Ascending aorta (tissue), 2 donors: ENCODE measurements at regions of chr5 and their contacts with region 1.

Region 1: DNA sequence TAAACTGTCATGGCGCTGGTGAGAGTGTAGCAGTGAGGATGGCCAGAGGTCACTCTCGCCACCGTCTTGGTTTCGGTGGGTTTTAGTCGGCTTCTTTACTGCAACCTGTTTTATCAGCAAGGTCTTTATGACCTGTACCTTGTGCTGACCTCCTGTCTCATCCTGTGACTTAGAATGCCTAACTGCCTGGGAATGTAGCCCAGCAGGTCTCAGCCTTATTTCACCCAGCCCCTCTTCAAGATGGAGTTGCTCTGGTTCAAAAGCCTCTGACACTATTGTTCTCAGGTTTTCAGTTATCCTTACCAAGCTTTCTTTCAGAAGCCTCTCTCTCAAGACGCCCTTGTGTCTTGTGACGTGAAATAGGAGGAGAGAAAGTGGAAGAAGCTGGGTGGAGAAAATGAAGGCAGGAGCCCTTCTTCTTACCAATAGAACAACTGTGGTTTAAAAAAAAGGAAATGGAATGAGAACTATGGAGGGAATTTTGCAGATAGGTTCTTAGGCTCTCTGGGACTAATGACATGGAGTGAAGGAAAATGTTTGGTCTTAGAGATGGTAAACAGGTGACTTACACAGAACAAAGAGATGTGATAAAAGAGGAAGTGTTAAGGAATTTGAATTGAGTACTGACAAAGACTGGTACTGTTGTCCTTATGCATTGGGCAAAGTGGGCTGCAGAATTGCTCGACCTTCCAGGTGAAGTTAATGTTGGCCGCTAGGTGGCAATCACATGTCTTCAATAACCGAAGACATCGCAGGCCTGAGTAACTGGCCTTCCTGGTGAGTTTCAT is 133.3 kb upstream of the RAI14 start:
- DNase-seq: peak in 1 of 2 donors; percentile 89
- H3K4me3 ChIP-seq: no peak overlapping the region
- H3K27ac ChIP-seq: peak overlapping the region; percentile 81 to 82
- H3K4me1 ChIP-seq: peaks cover 0 to 28% of the 10 kb centered on the region in 2 donors
- H3K27me3 ChIP-seq: no peaks in the 10 kb centered on the region
- CTCF ChIP-seq: peak; percentile 65 to 70 (median 68)

Region 2: GRCh38 chr5:34494111-34494755 is 28.6 kb before region 1 on chr5:
- intact Hi-C with region 1: no loop called
- DNase-seq: no peak
- H3K4me3 ChIP-seq: no peak overlapping the region
- H3K27ac ChIP-seq: peak overlapping the region in 1 of 2 donors; percentile 47
- H3K4me1 ChIP-seq: peaks cover 15 to 45% of the 10 kb centered on the region in 2 donors
- H3K27me3 ChIP-seq: no peaks in the 10 kb centered on the region
- CTCF ChIP-seq: no peak

Region 3: GRCh38 chr5:34608859-34609648 is 86.3 kb after region 1 on chr5:
- intact Hi-C with region 1: loop called (anchors 2 kb)
- DNase-seq: peak in 1 of 2 donors; percentile 70
- H3K4me3 ChIP-seq: peak overlapping the region in 1 of 2 donors; percentile 3
- H3K27ac ChIP-seq: peak overlapping the region; percentile 66 to 74
- H3K4me1 ChIP-seq: peaks cover 3 to 18% of the 10 kb centered on the region in 2 donors
- H3K27me3 ChIP-seq: no peaks in the 10 kb centered on the region
- CTCF ChIP-seq: no peak

Region 4: DNA sequence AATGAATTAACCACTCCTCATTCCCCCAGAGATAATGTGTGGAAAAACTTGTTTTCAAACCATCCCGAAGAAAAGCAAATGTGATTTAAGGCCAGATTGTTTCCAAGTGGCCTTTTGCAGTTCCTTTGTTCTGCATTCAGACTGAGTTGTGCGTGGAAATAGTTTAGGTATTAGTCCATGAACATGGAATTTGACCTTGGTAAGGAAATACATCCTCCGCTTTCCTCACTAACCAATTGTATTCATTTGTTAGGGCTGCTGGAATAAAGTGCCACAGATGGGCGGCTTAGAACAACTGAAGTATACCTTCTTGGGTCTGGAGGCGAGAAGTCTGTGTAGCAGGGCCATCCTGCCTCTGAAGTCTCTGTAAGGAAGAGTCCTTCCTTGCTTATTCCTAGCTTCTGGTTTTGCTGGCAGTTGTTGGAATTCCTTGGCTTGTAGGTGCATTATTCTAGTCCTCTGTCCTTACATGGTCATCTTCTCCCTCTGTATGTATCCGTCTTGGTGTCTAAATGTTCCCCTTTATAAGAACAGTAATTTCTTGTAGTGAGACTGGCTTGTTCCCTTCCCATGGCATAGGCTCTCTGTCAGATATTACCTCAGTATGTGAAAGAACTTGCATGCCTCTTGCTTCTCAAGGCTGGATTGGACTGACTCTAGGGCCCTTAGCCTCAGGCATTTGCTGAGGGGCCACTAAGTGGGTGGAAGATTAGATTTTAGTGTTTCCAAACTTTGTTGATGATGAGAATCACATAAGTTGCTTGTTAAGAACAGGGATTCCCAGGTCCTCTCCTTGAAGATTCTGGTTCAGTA is 187.3 kb after region 1 on chr5:
- intact Hi-C with region 1: loop called (anchors 5 kb)
- DNase-seq: no peak
- H3K4me3 ChIP-seq: no peak overlapping the region
- H3K27ac ChIP-seq: peak overlapping the region; percentile 77 to 80
- H3K4me1 ChIP-seq: peaks cover 7 to 37% of the 10 kb centered on the region in 2 donors
- H3K27me3 ChIP-seq: no peaks in the 10 kb centered on the region
- CTCF ChIP-seq: no peak

Region 5: DNA sequence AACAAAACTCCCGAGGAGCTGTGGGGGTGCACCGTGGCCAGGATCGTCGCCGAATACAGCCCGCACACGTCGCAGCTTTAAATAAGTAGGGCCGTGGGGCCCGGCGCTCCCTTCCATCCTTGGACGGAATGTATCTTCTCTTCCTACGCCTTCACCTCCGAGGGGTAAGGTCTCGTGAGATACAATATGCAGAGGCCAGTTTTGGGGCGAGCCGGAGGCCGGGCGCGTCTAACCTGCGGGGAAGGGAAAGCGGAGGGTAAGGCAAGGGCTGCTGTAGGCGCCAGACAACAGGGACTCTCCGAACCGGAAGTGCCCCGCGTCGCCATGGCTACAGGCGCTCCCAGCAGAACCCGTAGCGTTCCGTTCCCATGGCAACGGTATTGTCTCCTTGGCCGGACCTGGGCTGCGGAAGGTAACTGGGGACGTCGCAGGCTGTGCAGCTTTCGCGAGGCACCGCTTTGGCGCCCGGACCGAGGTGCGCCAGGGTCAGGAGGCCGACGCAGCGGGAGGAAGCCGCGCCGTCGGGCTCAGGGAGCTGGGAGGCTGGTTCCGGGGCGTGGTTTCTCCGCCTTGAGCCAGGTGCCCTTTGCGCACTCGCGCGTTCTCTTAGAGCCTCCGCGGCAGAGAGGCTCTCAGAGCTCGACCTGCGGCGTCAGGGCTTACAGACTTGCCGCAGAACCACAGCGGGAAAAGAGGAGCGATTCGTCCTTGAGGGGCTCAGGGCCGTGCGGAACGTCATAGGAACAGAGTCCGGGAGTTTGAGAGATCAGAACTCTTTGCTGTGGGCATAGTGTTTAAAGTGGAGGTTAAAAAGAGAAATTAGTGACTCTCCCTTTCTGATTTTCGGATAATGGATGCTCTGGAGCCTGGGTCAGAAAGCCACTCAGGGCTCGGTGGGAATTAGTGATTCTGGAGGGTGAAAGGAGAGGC is 316.3 kb after region 1 on chr5 and contains the start of gene TTC23L:
- intact Hi-C with region 1: loop called (anchors 5 kb)
- DNase-seq: peak; percentile 56 to 93
- H3K4me3 ChIP-seq: peak within 1 kb of the TSS; percentile 76 to 83
- H3K27ac ChIP-seq: peak within 1 kb of the TSS; percentile 63 to 70
- H3K4me1 ChIP-seq: peaks cover 0 to 3% of the 10 kb centered on the region in 2 donors
- H3K27me3 ChIP-seq: no peaks in the 10 kb centered on the region
- CTCF ChIP-seq: no peak
- total RNA-seq, gene TTC23L: not detected

Region 6: DNA sequence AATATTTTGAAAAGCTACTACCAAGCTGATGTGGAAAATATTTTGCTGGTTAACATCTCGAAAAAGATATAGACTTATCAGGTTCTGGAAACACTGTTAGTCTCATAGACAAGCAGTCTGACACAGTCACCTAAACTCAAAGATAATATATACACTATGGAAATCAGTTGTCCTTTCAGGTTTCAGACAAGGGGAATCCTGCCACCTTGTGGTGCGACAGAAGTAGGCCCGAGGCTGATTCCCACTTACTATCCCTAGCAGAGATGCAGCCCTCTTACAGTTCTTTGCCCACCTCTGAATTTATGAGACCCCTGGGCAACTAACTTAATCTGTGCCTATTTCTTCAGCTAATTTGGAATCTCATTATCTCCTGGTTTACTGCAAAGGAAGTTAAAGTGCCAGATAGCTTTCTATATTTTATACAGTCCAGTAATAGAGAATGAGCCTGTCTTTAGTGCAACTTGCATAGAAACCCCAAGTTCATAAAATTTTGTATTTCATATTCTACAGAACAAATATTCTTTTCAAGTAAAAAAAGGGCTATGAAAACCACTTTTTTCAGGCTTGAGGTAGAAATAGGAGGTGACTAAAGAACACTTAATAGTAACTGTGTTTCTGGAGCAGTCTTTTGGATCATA is 375.6 kb after region 1 on chr5:
- intact Hi-C with region 1: loop called (anchors 1 kb)
- DNase-seq: peak in 1 of 2 donors; percentile 73
- H3K4me3 ChIP-seq: no peak overlapping the region
- H3K27ac ChIP-seq: no peak overlapping the region
- H3K4me1 ChIP-seq: no peaks in the 10 kb centered on the region
- H3K27me3 ChIP-seq: no peaks in the 10 kb centered on the region
- CTCF ChIP-seq: peak; percentile 80 to 90 (median 85)